CD4-positive, alpha-beta T cell (primary cell): ENCODE measurements at regions of chr10 and their contacts with region 1.

Region 1: DNA sequence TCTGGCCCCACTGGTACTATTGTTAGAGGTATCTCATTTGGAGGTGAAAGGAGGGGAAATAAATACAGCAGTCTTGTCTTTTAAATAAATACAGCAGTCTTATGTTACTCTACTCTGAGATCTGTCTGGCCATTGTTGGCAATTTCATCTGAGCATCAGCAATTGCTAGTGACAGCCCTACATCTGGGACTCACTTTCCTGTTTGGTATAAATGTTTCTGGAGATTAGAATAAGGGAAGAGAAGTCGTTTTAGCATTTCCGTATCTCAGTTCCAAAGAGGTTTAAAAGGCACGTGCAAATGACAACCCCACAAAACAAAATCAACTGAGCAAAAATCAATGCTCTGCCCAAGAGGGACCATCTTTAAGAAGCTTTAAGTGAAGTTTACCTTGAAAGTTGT is 18.1 kb upstream of the CNNM2 start:
- DNase-seq: no peak
- ATAC-seq: no peak
- H3K4me3 ChIP-seq: no peak overlapping the region
- H3K4me3 Mint-ChIP-seq: no peak overlapping the region
- H3K27ac ChIP-seq: no peak overlapping the region
- H3K27ac Mint-ChIP-seq: no peak overlapping the region
- H3K4me1 ChIP-seq: no peaks in the 10 kb centered on the region
- H3K4me1 Mint-ChIP-seq: no peaks in the 10 kb centered on the region
- H3K27me3 ChIP-seq: no peaks in the 10 kb centered on the region
- H3K27me3 Mint-ChIP-seq: no peaks in the 10 kb centered on the region
- CTCF ChIP-seq: no peak

Region 2: DNA sequence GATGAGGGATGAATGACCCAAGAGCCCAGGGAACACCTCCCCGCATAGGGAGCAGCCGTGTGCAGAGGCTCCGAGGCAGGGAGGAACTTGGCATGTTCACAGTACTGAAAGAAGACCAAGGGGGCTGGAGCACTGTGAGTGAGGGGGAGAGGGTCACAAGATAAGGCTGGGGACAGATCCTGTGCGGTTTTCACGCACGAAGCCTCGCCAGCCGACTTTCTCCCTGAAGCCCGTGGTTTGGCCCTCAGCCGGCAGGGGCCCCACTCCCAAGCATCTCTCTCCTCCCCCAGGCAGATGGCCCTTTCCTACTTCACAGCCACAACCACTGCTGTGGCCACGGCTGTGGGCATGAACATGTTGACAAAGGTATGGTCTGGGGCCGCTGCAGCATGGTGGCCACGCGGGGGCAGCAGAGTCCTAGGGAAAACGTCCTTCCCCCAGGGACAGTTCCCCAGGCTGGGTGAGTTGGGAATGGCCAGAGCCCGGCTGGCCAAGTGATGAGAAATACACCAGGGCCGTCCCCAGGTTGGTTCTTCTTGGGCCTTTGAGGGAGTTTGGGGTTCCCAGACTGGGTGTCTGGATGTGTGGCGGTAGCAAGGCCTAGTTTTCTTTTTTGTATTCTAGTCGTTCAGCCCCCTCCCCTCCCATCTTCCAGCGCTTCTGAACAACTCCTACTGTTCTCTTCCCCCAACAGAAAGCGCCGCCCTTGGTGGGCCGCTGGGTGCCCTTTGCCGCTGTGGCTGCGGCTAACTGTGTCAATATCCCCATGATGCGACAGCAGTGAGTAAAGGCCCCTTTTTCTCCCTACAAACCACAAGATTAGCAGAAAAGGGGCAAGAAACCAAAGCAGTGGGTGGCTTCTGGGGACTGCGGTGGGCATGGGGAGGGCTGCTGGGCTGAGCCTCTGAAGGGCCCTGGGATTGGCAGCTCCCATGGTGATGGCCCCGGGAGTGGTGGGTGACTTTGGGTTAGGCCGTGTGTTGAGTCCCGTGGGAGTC is 170.7 kb before region 1 on chr10:
- CTCF ChIA-PET with region 1: no interaction called
- POLR2A ChIA-PET with region 1: no interaction called
- intact Hi-C with region 1: loop called in 1 of 2 experiments (anchors 2 kb)
- DNase-seq: peak; percentile 26 to 74 (median 45)
- ATAC-seq: peak; percentile 57
- H3K4me3 ChIP-seq: no peak overlapping the region
- H3K4me3 Mint-ChIP-seq: no peak overlapping the region
- H3K27ac ChIP-seq: no peak overlapping the region
- H3K27ac Mint-ChIP-seq: no peak overlapping the region
- H3K4me1 ChIP-seq: peaks cover 4% of the 10 kb centered on the region
- H3K4me1 Mint-ChIP-seq: peaks cover 8% of the 10 kb centered on the region
- H3K27me3 ChIP-seq: no peaks in the 10 kb centered on the region
- H3K27me3 Mint-ChIP-seq: no peaks in the 10 kb centered on the region
- CTCF ChIP-seq: peak; percentile 69

Region 3: DNA sequence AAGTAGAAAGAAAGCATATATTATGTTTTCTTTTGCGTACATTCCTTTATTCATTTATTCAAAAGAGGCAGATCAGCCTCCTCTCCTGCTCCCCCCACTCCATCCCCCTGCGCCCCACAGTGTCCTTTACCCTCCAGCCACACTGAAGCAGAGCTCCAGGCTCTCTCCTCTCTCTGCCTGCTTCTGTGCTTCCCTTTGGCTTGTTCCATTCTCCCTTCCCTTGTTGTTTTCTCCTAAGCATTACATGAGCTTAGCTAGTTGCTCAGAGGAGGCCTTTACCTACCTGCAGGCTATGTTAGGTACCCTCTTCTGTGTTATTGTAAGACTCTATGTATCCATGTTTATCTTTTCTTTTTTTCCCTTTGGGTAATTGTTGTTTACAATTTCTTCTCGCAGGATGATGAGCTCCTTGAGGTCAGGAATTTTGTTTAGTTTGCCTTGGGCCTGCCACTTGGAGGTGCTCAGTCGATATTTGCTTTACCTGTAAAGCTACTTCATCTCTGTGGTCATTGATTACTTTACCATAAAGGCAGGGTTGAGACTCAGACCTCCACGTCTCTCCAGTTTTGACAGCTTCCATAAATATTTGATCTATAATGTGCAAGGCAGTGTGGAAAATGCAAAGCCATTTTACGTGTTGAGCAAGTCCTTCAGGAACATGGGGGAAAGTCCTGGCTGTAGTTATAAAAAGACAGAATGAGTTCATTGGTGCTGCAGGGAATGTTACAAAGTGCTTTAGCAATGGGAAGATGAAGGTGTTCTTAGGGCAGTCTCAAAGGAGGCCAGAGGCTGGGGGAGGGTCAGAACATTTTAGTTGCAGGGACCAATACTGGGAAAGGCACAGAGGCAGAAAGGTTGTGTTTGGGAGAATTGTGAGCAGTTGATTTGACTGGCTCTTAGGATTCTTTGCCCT is 45.7 kb after region 1 on chr10:
- CTCF ChIA-PET with region 1: no interaction called
- POLR2A ChIA-PET with region 1: no interaction called
- intact Hi-C with region 1: no loop called
- DNase-seq: no peak
- ATAC-seq: no peak
- H3K4me3 ChIP-seq: no peak overlapping the region
- H3K4me3 Mint-ChIP-seq: no peak overlapping the region
- H3K27ac ChIP-seq: no peak overlapping the region
- H3K27ac Mint-ChIP-seq: no peak overlapping the region
- H3K4me1 ChIP-seq: no peaks in the 10 kb centered on the region
- H3K4me1 Mint-ChIP-seq: no peaks in the 10 kb centered on the region
- H3K27me3 ChIP-seq: no peaks in the 10 kb centered on the region
- H3K27me3 Mint-ChIP-seq: no peaks in the 10 kb centered on the region
- CTCF ChIP-seq: no peak